GM18951 (cell line): ENCODE measurements at regions of chr9 and their contacts with region 1.

Region 1: DNA sequence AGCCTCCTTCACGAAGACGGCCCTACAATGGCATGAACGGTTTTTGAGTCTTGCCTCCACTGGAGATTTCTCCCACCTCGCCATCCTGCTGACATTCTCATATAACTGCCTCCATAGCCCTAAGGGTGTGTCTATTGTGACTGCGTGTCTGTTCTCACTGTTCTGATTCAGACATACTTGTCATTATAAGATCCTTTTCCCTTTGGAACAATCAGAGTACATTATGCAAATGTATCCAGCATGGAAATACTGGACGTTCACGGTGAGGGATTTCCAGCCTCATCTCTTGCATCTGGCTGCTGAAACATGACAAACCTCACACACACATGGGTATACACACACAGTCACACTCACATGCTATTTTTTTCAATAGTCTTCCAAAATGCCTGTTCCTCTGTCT is 402.1 kb downstream of the DIRAS2 start:
- POLR2A ChIP-seq: no peak

Region 2: DNA sequence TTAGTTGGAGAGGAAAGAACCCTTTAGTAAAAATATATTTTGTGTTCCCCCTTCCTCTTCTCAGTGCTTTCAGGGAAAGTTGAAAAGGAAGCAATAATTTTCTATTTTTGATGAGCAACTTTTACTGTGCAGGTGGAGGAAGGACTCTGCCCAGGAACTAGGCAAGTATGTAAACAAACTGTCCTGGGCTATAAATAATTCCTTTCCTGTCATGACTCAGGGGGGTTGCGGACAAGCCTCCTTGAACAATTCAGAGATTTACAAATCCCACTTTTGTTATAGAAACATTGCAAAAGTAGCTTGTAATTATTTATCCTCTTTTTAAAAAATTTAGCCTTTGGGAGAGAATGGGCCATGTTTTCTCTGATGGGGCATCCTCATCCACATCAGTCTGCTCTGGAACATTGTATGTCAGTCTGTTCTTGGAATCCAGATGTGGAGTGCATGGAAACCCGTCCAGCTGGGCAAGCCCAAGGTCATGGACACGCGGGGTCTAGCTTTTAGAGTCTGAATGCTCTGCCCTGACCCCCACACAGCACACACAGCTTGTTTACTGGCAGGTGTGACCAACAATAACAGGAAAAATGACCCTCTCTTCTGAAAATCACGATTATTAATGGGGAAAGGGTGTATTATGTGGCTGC is 508.1 kb before region 1 on chr9:
- in situ Hi-C with region 1: no loop called
- POLR2A ChIP-seq: no peak

Region 3: GRCh38 chr9:90198956-90199355 is 41.6 kb before region 1 on chr9:
- in situ Hi-C with region 1: no loop called
- POLR2A ChIP-seq: no peak

Region 4: DNA sequence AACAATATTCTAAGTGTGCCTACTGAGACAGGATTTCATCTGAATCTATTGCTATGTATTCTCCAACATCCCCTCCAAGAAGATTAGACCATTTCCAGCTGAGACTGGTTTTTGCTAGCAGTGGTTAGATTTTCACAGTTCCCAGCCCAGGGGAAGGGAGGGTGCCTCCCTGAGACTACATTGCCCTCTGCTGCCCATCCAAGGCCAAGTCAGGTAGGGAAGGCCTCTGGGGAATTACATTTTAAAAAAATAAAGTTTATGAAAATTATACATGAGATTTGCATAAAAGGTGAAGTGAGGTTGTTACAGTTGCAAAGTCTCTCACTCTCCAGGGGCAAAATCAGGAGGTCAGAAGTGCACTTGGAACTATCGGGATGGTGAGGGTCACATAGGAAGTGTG is 533.1 kb after region 1 on chr9:
- in situ Hi-C with region 1: loop called (anchors 25 kb)
- POLR2A ChIP-seq: no peak